PC-3 (cell line): ENCODE measurements at regions of chr10 and their contacts with region 1.

Region 1: GRCh38 chr10:70549962-70550458 is 52.5 kb downstream of the PRF1 start:
- DNase-seq: peak; percentile 91
- ATAC-seq: peak; percentile 95
- H3K4me3 ChIP-seq: no peak overlapping the region
- H3K27ac ChIP-seq: no peak overlapping the region
- H3K4me1 ChIP-seq: no peaks in the 10 kb centered on the region
- H3K27me3 ChIP-seq: no peaks in the 10 kb centered on the region
- CTCF ChIP-seq: peak; percentile 99

Region 2: GRCh38 chr10:70589762-70590654 is 40.0 kb after region 1 on chr10:
- CTCF ChIA-PET with region 1: no interaction called
- POLR2A ChIA-PET with region 1: no interaction called
- intact Hi-C with region 1: no loop called
- DNase-seq: no peak
- ATAC-seq: no peak
- H3K4me3 ChIP-seq: no peak overlapping the region
- H3K27ac ChIP-seq: no peak overlapping the region
- H3K4me1 ChIP-seq: peaks cover 5% of the 10 kb centered on the region; the same call in 1 of the 2 replicates
- H3K27me3 ChIP-seq: no peaks in the 10 kb centered on the region
- CTCF ChIP-seq: no peak

Region 3: GRCh38 chr10:70671619-70672164 is 121.7 kb after region 1 on chr10:
- CTCF ChIA-PET with region 1: interaction called, 14 read pairs
- POLR2A ChIA-PET with region 1: no interaction called
- intact Hi-C with region 1: no loop called
- DNase-seq: no peak
- ATAC-seq: no peak
- H3K4me3 ChIP-seq: peak overlapping the region; percentile 60
- H3K27ac ChIP-seq: no peak overlapping the region
- H3K4me1 ChIP-seq: peaks cover 26% of the 10 kb centered on the region
- H3K27me3 ChIP-seq: no peaks in the 10 kb centered on the region
- CTCF ChIP-seq: peak; percentile 29; the same call in 1 of the 2 replicates

Region 4: GRCh38 chr10:70791386-70792039 is 241.5 kb after region 1 on chr10:
- CTCF ChIA-PET with region 1: interaction called, 10 read pairs
- POLR2A ChIA-PET with region 1: no interaction called
- intact Hi-C with region 1: no loop called
- DNase-seq: peak; percentile 92
- ATAC-seq: peak; percentile 33; the same call in 1 of the 2 replicates
- H3K4me3 ChIP-seq: no peak overlapping the region
- H3K27ac ChIP-seq: peak overlapping the region; percentile 4; the same call in 1 of the 2 replicates
- H3K4me1 ChIP-seq: peaks cover 12% of the 10 kb centered on the region
- H3K27me3 ChIP-seq: no peaks in the 10 kb centered on the region
- CTCF ChIP-seq: no peak